ENCODE measurements at regions of chr18 and their contacts with region 1.

Region 1: DNA sequence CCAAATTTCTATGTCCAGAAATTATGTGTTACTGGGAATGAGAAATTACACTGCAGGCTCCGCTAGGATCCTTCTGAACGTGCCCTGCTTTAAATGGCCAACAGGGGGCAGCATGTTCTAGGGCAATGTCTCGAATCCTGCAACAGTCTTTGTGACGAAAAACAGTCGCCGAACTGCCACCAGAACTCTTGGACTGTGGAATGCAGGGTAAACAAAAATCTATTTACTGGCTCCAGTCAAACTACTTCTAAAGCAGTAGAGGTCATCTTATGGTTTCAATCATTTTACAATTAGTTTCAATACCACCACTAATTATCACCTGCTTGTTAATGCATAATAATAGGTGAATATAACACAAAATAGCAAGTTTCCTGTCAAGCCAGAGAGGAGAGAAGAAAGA is 9.8 kb upstream of the ZNF397 start:
- DNase-seq: peak; percentile 67 to 92
- ATAC-seq: peak; percentile 91 to 99 (median 96)
- H3K4me3 ChIP-seq: no peak overlapping the region
- H3K4me3 Mint-ChIP-seq: peak overlapping the region; percentile 41
- H3K27ac ChIP-seq: no peak overlapping the region
- H3K27ac Mint-ChIP-seq: peak overlapping the region; percentile 39 to 59
- H3K4me1 ChIP-seq: no peaks in the 10 kb centered on the region
- H3K4me1 Mint-ChIP-seq: peaks cover 4 to 5% of the 10 kb centered on the region in 2 donors
- H3K27me3 ChIP-seq: no peaks in the 10 kb centered on the region
- H3K27me3 Mint-ChIP-seq: no peaks in the 10 kb centered on the region
- CTCF ChIP-seq: peak; percentile 95

Region 2: DNA sequence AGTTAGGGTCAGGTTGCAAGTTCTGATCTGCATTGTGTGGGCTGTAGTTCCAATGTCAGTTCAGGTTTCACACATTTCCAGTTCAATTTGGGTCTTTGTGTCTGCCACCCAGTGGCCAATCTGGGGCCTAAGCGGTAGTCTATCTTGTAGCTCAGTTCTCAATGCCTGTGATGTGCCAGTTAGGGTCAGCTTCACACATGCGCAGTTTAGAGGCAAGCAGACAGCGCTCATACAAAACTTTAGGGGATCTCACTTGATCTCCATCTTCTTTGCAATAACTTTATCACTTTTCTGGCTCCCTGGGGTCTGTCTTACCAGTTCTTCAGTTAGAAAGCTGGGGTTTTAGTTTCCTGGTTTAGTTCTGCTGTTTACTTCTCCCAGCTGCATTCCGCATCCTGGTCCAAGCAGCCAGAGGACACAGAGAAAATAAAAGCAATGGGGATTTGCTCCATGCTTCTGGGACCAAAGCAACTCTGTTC is 124.1 kb after region 1 on chr18:
- intact Hi-C with region 1: loop called (anchors 1 kb)
- DNase-seq: peak; percentile 49 to 83
- ATAC-seq: peak; percentile 88 to 100 (median 99)
- H3K4me3 ChIP-seq: no peak overlapping the region
- H3K4me3 Mint-ChIP-seq: no peak overlapping the region
- H3K27ac ChIP-seq: no peak overlapping the region
- H3K27ac Mint-ChIP-seq: no peak overlapping the region
- H3K4me1 ChIP-seq: peaks cover 4% of the 10 kb centered on the region
- H3K4me1 Mint-ChIP-seq: no peaks in the 10 kb centered on the region
- H3K27me3 ChIP-seq: no peaks in the 10 kb centered on the region
- H3K27me3 Mint-ChIP-seq: peaks cover 0 to 6% of the 10 kb centered on the region in 2 donors
- CTCF ChIP-seq: peak; percentile 66

Region 3: DNA sequence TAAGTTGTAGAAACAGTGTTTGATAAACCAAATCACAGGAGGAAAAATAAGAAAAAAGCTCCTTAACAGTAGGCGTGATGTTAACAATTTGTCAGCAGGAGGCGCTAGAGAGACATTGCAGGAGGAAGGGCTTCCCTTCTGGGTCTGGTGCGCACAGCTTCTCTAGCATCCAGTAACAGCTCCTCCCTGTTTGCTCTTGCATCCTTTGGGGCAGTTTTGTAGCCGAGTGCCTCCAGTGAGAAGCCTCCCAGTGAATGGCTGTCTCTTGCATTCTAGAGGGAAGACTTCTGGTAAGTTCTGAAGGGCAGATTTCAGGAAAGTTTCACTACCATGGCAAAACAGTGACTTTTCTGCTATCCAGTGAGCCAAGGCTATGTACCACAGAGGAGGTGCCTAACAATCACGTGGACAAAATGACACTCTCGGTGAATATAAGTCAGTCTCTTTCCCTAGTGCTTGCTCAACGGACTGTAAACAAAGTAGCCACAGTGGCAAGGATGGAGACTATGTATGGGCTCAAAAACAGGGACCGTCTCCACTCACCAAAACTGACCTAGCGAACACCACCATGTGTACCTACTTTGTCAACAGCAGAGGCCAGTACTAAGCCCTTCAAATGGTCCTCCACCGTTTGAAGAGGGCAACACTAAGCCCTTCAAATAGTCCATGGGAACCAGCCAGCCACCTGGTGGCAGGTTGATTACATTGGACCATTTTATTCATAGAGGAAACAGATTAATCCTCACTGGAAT is 155.7 kb after region 1 on chr18:
- intact Hi-C with region 1: loop called (anchors 1 kb)
- DNase-seq: peak; percentile 46 to 91
- ATAC-seq: peak; percentile 95 to 99 (median 98)
- H3K4me3 ChIP-seq: no peak overlapping the region
- H3K4me3 Mint-ChIP-seq: no peak overlapping the region
- H3K27ac ChIP-seq: no peak overlapping the region
- H3K27ac Mint-ChIP-seq: no peak overlapping the region
- H3K4me1 ChIP-seq: peaks cover 4% of the 10 kb centered on the region
- H3K4me1 Mint-ChIP-seq: peaks cover 5 to 9% of the 10 kb centered on the region in 2 donors
- H3K27me3 ChIP-seq: peaks cover 2% of the 10 kb centered on the region
- H3K27me3 Mint-ChIP-seq: peaks cover 24 to 31% of the 10 kb centered on the region in 2 donors
- CTCF ChIP-seq: peak; percentile 96

Region 4: GRCh38 chr18:35407871-35408481 is 176.9 kb after region 1 on chr18:
- intact Hi-C with region 1: loop called (anchors 2 kb)
- DNase-seq: peak in 1 of 2 donors; percentile 79
- ATAC-seq: peak; percentile 79 to 88 (median 84)
- H3K4me3 ChIP-seq: no peak overlapping the region
- H3K4me3 Mint-ChIP-seq: no peak overlapping the region
- H3K27ac ChIP-seq: no peak overlapping the region
- H3K27ac Mint-ChIP-seq: no peak overlapping the region
- H3K4me1 ChIP-seq: peaks cover 17% of the 10 kb centered on the region
- H3K4me1 Mint-ChIP-seq: peaks cover 5 to 8% of the 10 kb centered on the region in 2 donors
- H3K27me3 ChIP-seq: no peaks in the 10 kb centered on the region
- H3K27me3 Mint-ChIP-seq: peaks cover 9 to 15% of the 10 kb centered on the region in 2 donors
- CTCF ChIP-seq: peak; percentile 89